Kidney (tissue), 22 donors: ENCODE measurements at regions of chr1 and their contacts with region 1.

Region 1: DNA sequence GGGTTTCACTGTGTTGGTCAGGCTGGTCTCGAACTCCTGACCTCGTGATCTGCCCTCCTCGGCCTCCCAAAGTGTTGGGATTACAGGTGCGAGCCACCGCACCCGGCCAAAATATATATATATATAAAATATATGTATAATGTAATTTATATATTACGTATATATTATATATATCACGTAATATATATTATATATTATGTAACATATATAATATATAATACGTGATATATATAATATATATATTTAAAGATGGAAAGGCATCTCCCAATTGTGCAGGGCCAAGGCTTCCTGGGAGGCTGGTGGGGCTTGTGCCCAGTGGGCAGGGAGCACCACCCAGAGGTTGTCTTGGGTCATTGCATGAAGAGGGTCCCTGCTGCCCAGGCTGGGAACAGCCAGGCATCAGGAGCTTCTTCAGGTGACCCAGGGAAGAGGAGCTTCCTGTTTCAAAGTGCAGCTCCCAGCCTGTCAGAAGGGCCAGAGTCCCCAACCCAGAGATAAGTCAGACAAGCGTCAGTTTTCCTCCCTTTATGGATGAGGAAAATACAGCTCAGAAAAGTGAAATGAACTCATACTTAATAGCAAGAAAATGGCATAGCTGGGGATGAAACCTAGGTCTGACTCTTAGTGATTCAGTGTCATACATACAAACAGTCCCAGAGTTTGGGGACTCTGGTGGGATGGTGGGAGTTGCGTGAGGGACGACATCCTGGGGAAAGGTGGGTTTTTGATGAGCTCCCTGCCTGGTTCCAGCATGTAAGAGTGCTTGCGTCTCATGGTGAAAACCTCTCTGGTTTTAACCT is 12.0 kb downstream of the UBE2Q1 start:
- DNase-seq: peak in 4 of 5 donors; percentile 38 to 56 (median 52)
- H3K4me3 ChIP-seq: no peak overlapping the region
- H3K27ac ChIP-seq: no peak overlapping the region
- H3K4me1 ChIP-seq: peaks cover 0 to 10% (median 5%) of the 10 kb centered on the region in 3 donors
- H3K27me3 ChIP-seq: no peaks in the 10 kb centered on the region
- CTCF ChIP-seq: peak; percentile 69

Region 2: DNA sequence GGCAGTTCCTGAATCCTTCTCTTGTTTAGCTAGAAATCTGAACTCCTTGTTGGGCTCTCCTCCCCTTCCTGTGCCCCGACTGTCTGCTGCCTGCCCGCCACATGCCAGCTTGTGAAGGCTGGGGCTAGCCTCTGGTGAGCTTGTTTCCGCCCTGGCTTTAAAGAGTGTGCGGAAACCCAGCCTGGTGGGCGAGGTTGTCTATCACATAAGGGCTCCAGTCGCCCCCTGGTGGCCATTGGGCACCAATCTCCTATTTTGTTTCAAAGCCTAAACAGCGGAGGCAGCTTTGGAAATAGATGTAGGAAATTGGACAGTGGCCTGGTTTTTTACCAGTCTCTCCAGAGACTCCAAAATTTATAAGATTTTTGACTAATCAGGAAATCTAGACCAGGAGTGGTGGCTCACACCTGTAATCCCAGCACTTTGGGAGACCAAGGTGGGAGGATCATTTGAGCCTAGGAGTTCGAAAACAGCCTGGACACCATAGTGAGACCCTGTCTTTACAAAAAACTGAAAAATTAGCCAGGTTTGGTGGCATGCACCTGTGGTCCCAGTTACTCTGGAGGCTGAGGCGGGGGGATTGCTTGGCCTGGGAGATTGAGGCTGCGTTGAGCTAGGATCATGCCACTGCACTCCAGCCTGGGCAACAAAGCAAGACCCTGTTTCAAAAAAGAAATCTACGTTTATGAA is 211.3 kb before region 1 on chr1:
- intact Hi-C with region 1: no loop called
- DNase-seq: peak; percentile 83 to 93 (median 90)
- H3K4me3 ChIP-seq: no peak overlapping the region
- H3K27ac ChIP-seq: no peak overlapping the region
- H3K4me1 ChIP-seq: no peaks in the 10 kb centered on the region
- H3K27me3 ChIP-seq: no peaks in the 10 kb centered on the region
- CTCF ChIP-seq: peak; percentile 73

Region 3: DNA sequence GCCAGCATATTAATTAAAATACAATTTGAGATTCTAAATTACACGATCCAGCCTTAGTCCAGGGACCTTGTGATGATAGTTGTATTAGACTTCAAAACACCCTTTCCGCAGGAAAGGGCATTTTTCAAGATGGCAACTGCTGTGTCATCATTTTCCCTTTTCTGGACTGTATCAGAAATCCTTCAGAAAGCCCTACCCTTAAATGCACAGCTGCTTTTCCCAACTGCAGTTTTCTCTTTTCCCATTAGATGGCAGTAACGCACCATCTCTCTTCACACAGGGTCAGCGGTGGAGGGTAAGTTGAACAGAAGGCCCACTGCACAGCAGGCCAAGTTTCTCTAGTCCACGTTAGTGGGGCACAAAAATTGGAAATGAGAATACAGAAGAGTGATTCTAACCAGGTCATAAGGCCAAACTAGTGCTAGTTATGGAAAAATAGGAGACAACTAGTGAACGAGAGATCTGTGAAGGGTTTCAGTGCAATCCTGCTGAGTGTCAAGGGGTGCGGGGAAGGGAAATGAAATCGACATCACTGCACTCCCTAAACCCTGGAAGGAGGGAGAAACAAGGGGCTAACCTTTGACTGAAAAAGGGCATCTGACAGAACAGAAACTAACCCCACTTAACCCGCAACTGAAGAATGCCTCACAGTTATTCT is 66.6 kb before region 1 on chr1:
- intact Hi-C with region 1: loop called (anchors 5 kb)
- DNase-seq: peak in 4 of 5 donors; percentile 84 to 93 (median 88)
- H3K4me3 ChIP-seq: no peak overlapping the region
- H3K27ac ChIP-seq: no peak overlapping the region
- H3K4me1 ChIP-seq: no peaks in the 10 kb centered on the region
- H3K27me3 ChIP-seq: no peaks in the 10 kb centered on the region
- CTCF ChIP-seq: peak; percentile 96